Common myeloid progenitor, CD34-positive (primary cell): ENCODE measurements at regions of chr1 and their contacts with region 1.

Region 1: GRCh38 chr1:64453688-64454087 is 16.2 kb upstream of the CACHD1 start:
- DNase-seq: no peak
- H3K4me3 ChIP-seq: no peak overlapping the region
- H3K27ac ChIP-seq: no peak overlapping the region
- H3K4me1 ChIP-seq: no peaks in the 10 kb centered on the region
- H3K27me3 ChIP-seq: no peaks in the 10 kb centered on the region

Region 2: DNA sequence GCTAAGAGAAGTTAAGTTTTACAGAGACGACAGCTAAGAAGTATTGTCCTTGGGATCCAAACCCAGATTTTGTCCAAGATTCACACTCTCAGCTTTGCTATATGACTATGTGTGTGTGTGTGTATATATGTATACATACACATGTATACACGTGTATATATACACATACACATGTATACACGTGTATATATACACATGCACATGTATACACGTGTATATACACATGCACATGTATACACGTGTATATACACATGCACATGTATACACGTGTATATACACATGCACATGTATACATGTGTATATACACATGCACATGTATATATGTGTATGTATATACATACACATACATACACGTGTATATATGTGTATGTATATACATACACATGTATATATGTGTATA is 12.3 kb after region 1 on chr1:
- CTCF ChIA-PET with region 1: interaction called, 11 read pairs
- POLR2A ChIA-PET with region 1: no interaction called
- DNase-seq: no peak
- H3K4me3 ChIP-seq: no peak overlapping the region
- H3K27ac ChIP-seq: no peak overlapping the region
- H3K4me1 ChIP-seq: peaks cover 0 to 17% (median 9%) of the 10 kb centered on the region in 4 experiments
- H3K27me3 ChIP-seq: peaks cover 0 to 12% (median 7%) of the 10 kb centered on the region in 5 experiments

Region 3: DNA sequence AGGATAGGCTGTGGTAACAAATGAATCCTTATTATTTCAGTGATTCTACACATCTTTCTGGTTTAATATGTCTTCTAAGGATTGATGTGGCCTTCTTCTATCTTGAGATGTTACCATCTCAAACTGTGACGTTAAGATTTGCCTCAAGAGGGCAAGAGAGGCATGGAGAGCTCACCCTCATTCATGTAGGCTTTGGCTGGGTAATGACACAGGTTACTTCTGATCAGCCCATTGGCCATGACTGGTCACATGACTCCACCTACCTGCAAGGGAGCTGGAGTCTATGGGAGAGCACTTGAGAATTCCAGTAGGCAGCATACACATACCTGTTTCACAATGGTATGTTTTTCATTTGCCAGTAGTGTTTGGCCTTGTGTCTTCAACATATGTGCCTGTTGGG is 46.3 kb after region 1 on chr1:
- CTCF ChIA-PET with region 1: no interaction called
- POLR2A ChIA-PET with region 1: no interaction called
- DNase-seq: peak; percentile 27 to 45 (median 38)
- H3K4me3 ChIP-seq: no peak overlapping the region
- H3K27ac ChIP-seq: no peak overlapping the region
- H3K4me1 ChIP-seq: peaks cover 0 to 5% (median 2%) of the 10 kb centered on the region in 4 experiments
- H3K27me3 ChIP-seq: no peaks in the 10 kb centered on the region